ENCODE measurements at regions of chr19 and their contacts with region 1.

Region 1: DNA sequence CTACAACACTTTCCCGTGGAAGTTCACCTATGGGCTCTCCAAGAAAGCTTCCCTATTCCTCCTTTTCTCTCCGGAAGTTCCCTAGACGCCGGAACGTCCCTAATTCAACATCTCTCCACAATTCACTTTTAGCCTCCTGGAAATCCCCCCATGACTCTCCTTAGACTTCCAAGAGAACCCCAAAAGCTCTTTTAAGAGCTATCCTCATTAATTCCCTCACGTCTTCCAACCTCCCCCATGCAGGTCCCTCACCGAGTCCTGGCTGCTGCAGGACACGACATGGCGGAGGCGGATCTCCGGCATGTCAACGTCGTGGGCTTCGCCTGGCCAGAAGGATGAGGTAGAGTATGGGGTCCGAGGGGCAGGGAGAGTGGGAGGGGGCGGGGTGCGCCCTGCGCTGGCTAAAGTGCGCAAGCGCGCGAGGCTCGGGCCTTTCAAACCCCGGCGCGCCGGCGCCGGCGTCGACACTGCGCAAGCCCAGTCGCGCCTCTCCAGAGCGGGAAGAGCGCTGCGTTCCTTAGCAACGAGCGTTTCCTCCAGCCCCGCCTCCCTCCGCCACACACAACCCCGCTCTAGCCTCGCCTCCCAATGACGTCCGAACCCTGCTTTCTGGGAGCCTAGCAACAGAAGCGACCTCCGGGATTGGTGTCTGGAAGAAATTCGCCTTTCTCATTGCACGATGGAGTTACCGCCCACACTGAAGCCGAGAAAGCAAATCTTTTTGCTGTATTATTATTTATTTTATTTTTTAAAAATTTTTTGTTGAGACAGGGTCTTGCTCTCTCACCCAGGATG is at the starts of genes PINLYP and XRCC1:
- DNase-seq: peak in 1 of 2 donors; percentile 98
- H3K4me3 ChIP-seq: peak within 1 kb of the TSS; percentile 71 to 93
- H3K27ac ChIP-seq: peak within 1 kb of the TSS; percentile 80
- H3K4me1 ChIP-seq: peaks cover 17% of the 10 kb centered on the region
- H3K27me3 ChIP-seq: no peaks in the 10 kb centered on the region
- CTCF ChIP-seq: no peak
- POLR2A ChIP-seq: peak in 1 of 2 donors; percentile 13
- total RNA-seq, gene PINLYP: 8.8 TPM
- total RNA-seq, gene XRCC1: 20.9 TPM

Region 2: GRCh38 chr19:43534816-43535761 is 40.3 kb before region 1 on chr19:
- intact Hi-C with region 1: loop called (anchors 5 kb)
- DNase-seq: no peak
- H3K4me3 ChIP-seq: peak overlapping the region in 1 of 2 donors; percentile 61
- H3K27ac ChIP-seq: peak overlapping the region; percentile 96
- H3K4me1 ChIP-seq: peaks cover 27% of the 10 kb centered on the region
- H3K27me3 ChIP-seq: no peaks in the 10 kb centered on the region
- CTCF ChIP-seq: peak in 2 of 3 experiments; percentile 40 to 54
- POLR2A ChIP-seq: no peak

Measured in vagina (tissue), 2 donors.